ENCODE measurements at regions of chr20 and their contacts with region 1.

Region 1: DNA sequence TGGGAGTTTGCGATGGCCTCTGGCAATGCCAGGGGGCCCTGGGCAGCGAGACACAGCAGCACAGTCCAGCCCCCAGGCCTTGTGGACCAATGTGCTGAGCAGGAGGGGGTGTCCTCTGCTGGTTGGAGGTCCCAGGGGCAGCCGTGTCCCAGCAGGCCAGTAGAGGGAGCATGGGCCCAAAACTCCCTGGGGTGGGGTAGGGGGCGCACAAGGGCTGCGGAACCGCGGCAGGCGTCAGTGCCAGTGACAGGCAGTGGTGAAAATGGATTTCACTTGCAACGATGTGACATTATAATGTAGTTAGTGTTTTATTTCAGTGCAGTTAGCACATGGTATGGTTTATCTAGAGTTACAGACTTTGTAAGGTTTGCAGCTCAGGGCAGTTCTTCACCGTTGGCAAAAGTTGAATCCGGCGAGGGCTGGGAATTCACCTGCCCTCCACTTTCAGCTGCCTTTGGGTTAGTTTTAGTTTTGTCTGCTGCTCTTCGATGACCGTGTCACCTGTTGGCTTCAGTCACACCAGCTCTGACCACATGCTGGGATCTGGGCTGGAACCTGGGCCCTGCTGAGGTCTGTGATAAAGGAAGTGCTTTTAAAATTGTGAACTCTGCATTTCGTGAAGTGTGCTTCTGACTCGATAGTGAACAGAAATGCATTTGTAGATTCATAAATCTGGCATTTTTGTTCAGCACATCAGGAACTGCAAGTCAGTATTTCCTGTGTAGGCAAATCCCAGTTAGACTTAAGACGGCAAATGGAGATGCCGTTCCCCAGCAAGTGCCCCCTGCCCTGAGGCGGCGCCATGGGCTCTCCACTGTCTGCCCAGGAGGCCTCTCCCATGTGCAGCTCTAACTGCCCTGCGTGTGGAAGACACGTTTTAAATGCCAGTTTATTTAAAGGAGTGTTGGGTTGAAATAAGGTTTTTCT is 46.8 kb downstream of the PYGB start:
- DNase-seq: peak; percentile 24 to 76 (median 64)
- ATAC-seq: peak; percentile 88
- H3K4me3 ChIP-seq: no peak overlapping the region
- H3K4me3 Mint-ChIP-seq: no peak overlapping the region
- H3K27ac ChIP-seq: no peak overlapping the region
- H3K27ac Mint-ChIP-seq: no peak overlapping the region
- H3K4me1 ChIP-seq: peaks cover 5% of the 10 kb centered on the region
- H3K4me1 Mint-ChIP-seq: peaks cover 4% of the 10 kb centered on the region
- H3K27me3 ChIP-seq: no peaks in the 10 kb centered on the region
- H3K27me3 Mint-ChIP-seq: no peaks in the 10 kb centered on the region
- CTCF ChIP-seq: peak; percentile 77

Region 2: GRCh38 chr20:25247956-25248785 is 46.6 kb before region 1 on chr20 and contains the start of gene PYGB:
- CTCF ChIA-PET with region 1: interaction called, 4 read pairs
- POLR2A ChIA-PET with region 1: no interaction called
- intact Hi-C with region 1: loop called in 1 of 2 experiments (anchors 5 kb)
- DNase-seq: peak; percentile 65 to 87 (median 70)
- ATAC-seq: peak; percentile 88
- H3K4me3 ChIP-seq: peak within 1 kb of the TSS; percentile 97 to 99
- H3K4me3 Mint-ChIP-seq: peak within 1 kb of the TSS; percentile 93
- H3K27ac ChIP-seq: peak within 1 kb of the TSS; percentile 53 to 80
- H3K27ac Mint-ChIP-seq: peak within 1 kb of the TSS; percentile 91
- H3K4me1 ChIP-seq: peaks cover 29% of the 10 kb centered on the region
- H3K4me1 Mint-ChIP-seq: peaks cover 54% of the 10 kb centered on the region
- H3K27me3 ChIP-seq: no peaks in the 10 kb centered on the region
- H3K27me3 Mint-ChIP-seq: no peaks in the 10 kb centered on the region
- CTCF ChIP-seq: no peak
- total RNA-seq, gene PYGB: 35.2 to 39.2 TPM

Region 3: GRCh38 chr20:25281541-25281991 is 13.2 kb before region 1 on chr20:
- CTCF ChIA-PET with region 1: interaction called, 15 read pairs
- POLR2A ChIA-PET with region 1: no interaction called
- intact Hi-C with region 1: no loop called
- DNase-seq: no peak
- ATAC-seq: peak; percentile 20
- H3K4me3 ChIP-seq: no peak overlapping the region
- H3K4me3 Mint-ChIP-seq: no peak overlapping the region
- H3K27ac ChIP-seq: no peak overlapping the region
- H3K27ac Mint-ChIP-seq: no peak overlapping the region
- H3K4me1 ChIP-seq: no peaks in the 10 kb centered on the region
- H3K4me1 Mint-ChIP-seq: no peaks in the 10 kb centered on the region
- H3K27me3 ChIP-seq: no peaks in the 10 kb centered on the region
- H3K27me3 Mint-ChIP-seq: no peaks in the 10 kb centered on the region
- CTCF ChIP-seq: no peak

Region 4: GRCh38 chr20:25310268-25310920 is 15.7 kb after region 1 on chr20:
- CTCF ChIA-PET with region 1: interaction called, 21 read pairs
- POLR2A ChIA-PET with region 1: no interaction called
- intact Hi-C with region 1: no loop called
- DNase-seq: peak in 6 of 9 experiments; percentile 13 to 53 (median 39)
- ATAC-seq: peak; percentile 86
- H3K4me3 ChIP-seq: peak overlapping the region in 1 of 2 experiments; percentile 13
- H3K4me3 Mint-ChIP-seq: peak overlapping the region; percentile 66
- H3K27ac ChIP-seq: peak overlapping the region in 1 of 2 experiments; percentile 52
- H3K27ac Mint-ChIP-seq: peak overlapping the region; percentile 49
- H3K4me1 ChIP-seq: peaks cover 9% of the 10 kb centered on the region
- H3K4me1 Mint-ChIP-seq: peaks cover 16% of the 10 kb centered on the region
- H3K27me3 ChIP-seq: no peaks in the 10 kb centered on the region
- H3K27me3 Mint-ChIP-seq: no peaks in the 10 kb centered on the region
- CTCF ChIP-seq: no peak

Region 5: DNA sequence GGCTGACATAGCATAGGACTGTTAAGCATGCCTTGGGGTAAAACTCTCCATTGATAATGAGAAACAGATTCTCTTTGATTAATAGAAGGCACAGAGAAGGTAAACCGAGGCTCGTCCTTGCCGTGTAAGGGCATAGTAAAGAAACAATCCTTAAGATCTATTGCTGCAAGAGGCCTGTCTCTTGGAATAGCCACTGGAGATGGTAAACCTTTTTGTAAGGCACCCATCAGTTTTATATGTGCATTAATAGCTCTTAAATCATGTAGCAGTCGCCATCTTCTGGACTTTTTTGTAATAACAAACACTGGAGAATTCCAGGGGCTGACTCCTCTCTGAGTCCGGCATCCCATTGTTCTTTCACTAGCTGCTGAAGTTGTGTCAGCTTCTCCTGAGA is 104.3 kb after region 1 on chr20:
- CTCF ChIA-PET with region 1: interaction called, 75 read pairs
- POLR2A ChIA-PET with region 1: no interaction called
- intact Hi-C with region 1: loop called (anchors 1 kb)
- DNase-seq: peak in 4 of 9 experiments; percentile 5 to 70 (median 39)
- ATAC-seq: peak; percentile 54
- H3K4me3 ChIP-seq: no peak overlapping the region
- H3K4me3 Mint-ChIP-seq: no peak overlapping the region
- H3K27ac ChIP-seq: no peak overlapping the region
- H3K27ac Mint-ChIP-seq: no peak overlapping the region
- H3K4me1 ChIP-seq: no peaks in the 10 kb centered on the region
- H3K4me1 Mint-ChIP-seq: no peaks in the 10 kb centered on the region
- H3K27me3 ChIP-seq: no peaks in the 10 kb centered on the region
- H3K27me3 Mint-ChIP-seq: no peaks in the 10 kb centered on the region
- CTCF ChIP-seq: peak; percentile 47

Region 6: DNA sequence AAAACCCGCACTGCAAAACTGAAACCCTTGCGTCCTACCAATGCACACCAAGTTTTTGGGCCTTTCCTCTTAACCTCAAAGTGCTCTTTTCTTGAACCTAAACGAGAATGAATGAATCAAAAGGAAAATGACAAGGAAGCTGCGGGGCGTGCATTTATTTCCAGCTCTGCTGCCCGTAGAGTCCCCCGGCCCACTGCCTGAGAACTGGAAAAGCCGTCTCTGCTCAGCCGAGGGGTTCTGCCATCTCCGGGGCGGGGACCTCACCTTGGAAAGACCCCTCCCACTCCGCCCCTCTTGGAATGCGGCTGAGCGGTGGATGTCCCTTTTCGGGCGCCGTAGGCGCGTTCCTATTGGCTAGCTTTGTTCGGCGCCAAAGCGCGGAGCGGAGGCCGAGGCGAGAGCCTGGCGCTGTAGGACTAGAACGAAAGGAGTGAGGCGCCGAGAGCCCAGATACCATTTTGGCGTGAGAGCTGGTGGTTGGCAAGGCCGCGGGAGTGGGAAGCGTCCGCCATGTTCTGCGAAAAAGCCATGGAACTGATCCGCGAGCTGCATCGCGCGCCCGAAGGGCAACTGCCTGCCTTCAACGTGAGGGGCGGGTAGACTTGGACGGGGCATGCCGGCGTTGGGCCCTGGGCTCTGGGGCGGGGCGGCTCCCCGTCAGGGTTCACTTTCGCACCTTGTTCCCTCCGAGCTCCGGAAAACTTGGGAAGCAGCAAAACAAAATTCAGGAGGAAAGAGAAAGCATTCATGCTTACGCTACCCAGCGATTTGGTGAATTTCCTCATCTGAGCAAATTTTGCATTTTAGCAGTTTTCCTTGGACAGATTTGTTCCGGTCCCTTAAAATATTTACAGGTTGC is 112.8 kb after region 1 on chr20 and contains the start of gene GINS1:
- CTCF ChIA-PET with region 1: interaction called, 20 read pairs
- POLR2A ChIA-PET with region 1: no interaction called
- intact Hi-C with region 1: no loop called
- DNase-seq: peak; percentile 37 to 82 (median 66)
- ATAC-seq: peak; percentile 86
- H3K4me3 ChIP-seq: peak within 1 kb of the TSS; percentile 71 to 85
- H3K4me3 Mint-ChIP-seq: peak within 1 kb of the TSS; percentile 94
- H3K27ac ChIP-seq: peak within 1 kb of the TSS; percentile 30 to 40
- H3K27ac Mint-ChIP-seq: peak within 1 kb of the TSS; percentile 87
- H3K4me1 ChIP-seq: peaks cover 5% of the 10 kb centered on the region
- H3K4me1 Mint-ChIP-seq: peaks cover 10% of the 10 kb centered on the region
- H3K27me3 ChIP-seq: no peaks in the 10 kb centered on the region
- H3K27me3 Mint-ChIP-seq: no peaks in the 10 kb centered on the region
- CTCF ChIP-seq: no peak
- total RNA-seq, gene GINS1: 0.28 to 0.30 TPM